HCT116 (cell line): ENCODE measurements at regions of chr20 and their contacts with region 1.

Region 1: DNA sequence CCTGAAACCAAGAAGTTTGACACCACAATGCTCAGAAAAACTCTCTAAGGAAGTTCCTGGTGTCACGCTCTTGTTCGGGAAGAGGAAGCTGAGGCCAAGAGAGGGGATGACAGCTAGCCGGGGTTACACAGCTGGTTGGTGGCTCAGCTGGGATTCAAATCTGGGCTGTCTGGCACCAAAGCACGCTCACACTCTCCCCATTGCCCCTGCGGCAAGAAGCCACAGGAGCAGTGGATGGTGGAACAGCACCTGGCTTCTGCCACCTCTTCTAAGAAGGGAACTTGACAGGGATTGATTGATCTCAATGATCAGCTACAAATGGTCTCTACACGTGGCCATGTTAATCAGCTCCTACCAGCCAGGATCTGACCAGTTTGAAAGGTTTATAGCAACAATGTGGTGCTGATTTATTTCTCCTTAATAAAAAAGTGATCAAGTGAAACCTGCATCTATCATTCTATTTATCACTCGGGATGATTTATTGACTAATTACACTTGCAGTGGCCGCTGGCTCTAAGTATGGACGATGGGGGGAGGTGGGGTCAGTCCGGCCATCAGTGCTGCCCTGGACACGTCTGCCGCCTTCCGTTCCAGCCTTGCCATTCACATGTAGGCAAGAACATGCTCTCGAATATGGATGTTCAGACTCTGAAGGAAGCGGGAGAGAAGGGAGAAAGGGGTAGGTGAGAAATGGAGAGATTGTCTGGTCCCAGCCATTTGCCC is 71.9 kb upstream of the TOP1 start:
- DNase-seq: no peak
- ATAC-seq: no peak
- H3K4me3 ChIP-seq: no peak overlapping the region
- H3K27ac ChIP-seq: no peak overlapping the region
- H3K4me1 ChIP-seq: no peaks in the 10 kb centered on the region
- H3K27me3 ChIP-seq: no peaks in the 10 kb centered on the region
- CTCF ChIP-seq: no peak
- POLR2A ChIP-seq: no peak
- RAD21 ChIP-seq: no peak

Region 2: GRCh38 chr20:40728470-40728869 is 228.2 kb before region 1 on chr20:
- CTCF ChIA-PET with region 1: no interaction called
- POLR2A ChIA-PET with region 1: no interaction called
- RAD21 ChIA-PET with region 1: no interaction called
- intact Hi-C with region 1: loop called (anchors 5 kb)
- DNase-seq: no peak
- ATAC-seq: peak; percentile 72
- H3K4me3 ChIP-seq: no peak overlapping the region
- H3K27ac ChIP-seq: no peak overlapping the region
- H3K4me1 ChIP-seq: no peaks in the 10 kb centered on the region
- H3K27me3 ChIP-seq: no peaks in the 10 kb centered on the region
- CTCF ChIP-seq: peak; percentile 32 to 60 (median 59); a peak in 5 of 6 replicates
- POLR2A ChIP-seq: no peak
- RAD21 ChIP-seq: peak; percentile 31; the same call in 1 of the 2 replicates

Region 3: DNA sequence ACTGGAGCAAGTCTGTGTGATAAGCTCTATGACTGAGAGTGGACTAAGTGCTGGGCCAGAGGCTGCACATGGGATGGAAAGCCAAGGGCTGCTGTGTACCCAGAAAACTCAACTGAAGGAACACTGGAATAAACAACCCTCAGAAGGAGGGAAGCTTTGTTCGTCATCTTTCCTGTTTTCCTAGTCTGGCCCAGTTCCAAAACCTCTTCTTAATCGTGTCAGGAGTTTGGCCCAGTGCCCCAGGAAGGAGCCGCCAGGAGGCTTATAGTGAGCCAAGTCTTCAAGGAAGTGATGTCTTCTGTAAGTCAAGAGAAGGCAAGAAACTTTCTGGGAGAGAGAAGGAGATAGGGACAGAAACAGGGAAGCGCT is 48.6 kb after region 1 on chr20:
- CTCF ChIA-PET with region 1: no interaction called
- POLR2A ChIA-PET with region 1: no interaction called
- RAD21 ChIA-PET with region 1: no interaction called
- intact Hi-C with region 1: no loop called
- DNase-seq: peak; percentile 74
- ATAC-seq: no peak
- H3K4me3 ChIP-seq: peak overlapping the region in 1 of 2 experiments; percentile 49; a peak in 2 of 4 replicates
- H3K27ac ChIP-seq: peak overlapping the region; percentile 100
- H3K4me1 ChIP-seq: peaks cover 78 to 95% of the 10 kb centered on the region in 2 experiments
- H3K27me3 ChIP-seq: no peaks in the 10 kb centered on the region
- CTCF ChIP-seq: no peak
- POLR2A ChIP-seq: no peak
- RAD21 ChIP-seq: no peak